Ascending aorta (tissue), 2 donors: ENCODE measurements at regions of chr6 and their contacts with region 1.

Region 1: GRCh38 chr6:160041608-160042007 is 72.7 kb downstream of the IGF2R start:
- DNase-seq: no peak
- H3K4me3 ChIP-seq: peak overlapping the region in 1 of 2 donors; percentile 28
- H3K27ac ChIP-seq: peak overlapping the region; percentile 63 to 81
- H3K4me1 ChIP-seq: peaks cover 5 to 28% of the 10 kb centered on the region in 2 donors
- H3K27me3 ChIP-seq: no peaks in the 10 kb centered on the region
- CTCF ChIP-seq: peak in 1 of 3 experiments; percentile 17

Region 2: GRCh38 chr6:159761873-159762680 is 279.5 kb before region 1 on chr6 and contains the start of gene ACAT2:
- intact Hi-C with region 1: no loop called
- DNase-seq: peak; percentile 89 to 98
- H3K4me3 ChIP-seq: peak within 1 kb of the TSS; percentile 80 to 99
- H3K27ac ChIP-seq: peak within 1 kb of the TSS; percentile 96 to 99
- H3K4me1 ChIP-seq: peaks cover 5 to 11% of the 10 kb centered on the region in 2 donors
- H3K27me3 ChIP-seq: no peaks in the 10 kb centered on the region
- CTCF ChIP-seq: peak in 1 of 3 experiments; percentile 18
- total RNA-seq, gene ACAT2: 0.85 TPM

Region 3: DNA sequence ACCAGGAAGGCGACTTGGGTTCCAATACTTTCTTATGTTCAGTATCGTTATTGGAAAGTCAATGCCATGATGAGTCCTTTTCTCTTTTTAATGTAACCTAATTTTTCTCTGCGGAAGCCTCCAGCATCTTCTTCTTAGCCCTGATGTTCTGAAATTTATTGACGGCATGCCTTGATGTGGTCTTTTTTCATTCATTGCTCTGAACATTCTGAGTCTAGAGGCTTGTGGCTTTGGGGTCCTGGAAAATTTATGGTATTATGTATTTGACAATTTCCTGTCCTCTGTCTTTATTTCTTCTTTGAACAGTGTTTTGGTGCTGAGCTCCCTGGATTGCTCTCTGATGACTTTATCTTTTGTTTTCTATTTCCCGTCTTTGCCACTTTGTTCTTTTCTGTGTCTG is 179.5 kb before region 1 on chr6:
- intact Hi-C with region 1: loop called (anchors 5 kb)
- DNase-seq: no peak
- H3K4me3 ChIP-seq: no peak overlapping the region
- H3K27ac ChIP-seq: no peak overlapping the region
- H3K4me1 ChIP-seq: no peaks in the 10 kb centered on the region
- H3K27me3 ChIP-seq: no peaks in the 10 kb centered on the region
- CTCF ChIP-seq: no peak

Region 4: GRCh38 chr6:159968440-159969203 is 73.0 kb before region 1 on chr6 and contains the start of gene IGF2R:
- intact Hi-C with region 1: loop called (anchors 2 kb)
- DNase-seq: peak; percentile 89 to 97
- H3K4me3 ChIP-seq: peak within 1 kb of the TSS; percentile 100
- H3K27ac ChIP-seq: peak within 1 kb of the TSS; percentile 86 to 90
- H3K4me1 ChIP-seq: peaks cover 0 to 15% of the 10 kb centered on the region in 2 donors
- H3K27me3 ChIP-seq: no peaks in the 10 kb centered on the region
- CTCF ChIP-seq: no peak
- total RNA-seq, gene IGF2R: 104 TPM

Region 5: DNA sequence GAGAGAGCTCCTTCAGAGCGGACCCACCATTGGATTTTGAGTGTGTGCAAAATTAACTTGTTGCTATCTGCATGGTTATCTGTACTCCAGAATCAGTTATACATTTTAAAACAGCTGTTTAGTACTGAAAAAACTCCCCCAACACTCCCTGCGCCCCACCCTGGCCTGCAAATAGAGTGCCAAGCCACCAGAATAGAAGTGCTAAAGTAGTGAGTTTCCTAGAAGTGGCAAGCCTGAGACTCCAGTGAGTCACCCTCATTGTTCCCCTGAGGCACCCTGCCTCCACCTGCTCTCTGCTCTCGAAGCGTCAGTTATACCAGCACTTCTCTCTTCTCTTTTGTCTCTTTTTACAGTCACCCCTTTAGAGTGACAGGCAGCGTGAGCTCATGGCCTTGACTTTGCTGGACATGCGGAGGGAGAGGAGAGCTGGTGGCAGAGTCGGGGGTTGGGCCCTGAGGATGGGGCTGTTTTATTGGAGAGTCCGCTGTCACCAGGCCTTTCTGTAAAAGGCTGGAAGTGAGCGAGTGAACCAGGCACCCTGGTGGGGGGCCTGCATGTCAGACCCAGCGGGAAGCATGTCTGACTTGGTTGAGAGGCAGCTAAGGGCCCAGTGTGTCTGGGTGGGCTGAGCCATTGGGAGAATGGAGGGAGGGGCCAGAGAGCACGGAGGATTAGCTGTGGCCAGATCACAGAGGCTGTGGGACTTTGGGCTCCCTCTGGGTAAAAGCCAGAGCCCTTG is 62.3 kb before region 1 on chr6:
- intact Hi-C with region 1: loop called (anchors 2 kb)
- DNase-seq: peak in 1 of 2 donors; percentile 80
- H3K4me3 ChIP-seq: peak overlapping the region in 1 of 2 donors; percentile 7
- H3K27ac ChIP-seq: peak overlapping the region; percentile 58 to 78
- H3K4me1 ChIP-seq: peaks cover 29 to 55% of the 10 kb centered on the region in 2 donors
- H3K27me3 ChIP-seq: no peaks in the 10 kb centered on the region
- CTCF ChIP-seq: no peak

Region 6: GRCh38 chr6:160139420-160139851 is 97.8 kb after region 1 on chr6:
- intact Hi-C with region 1: no loop called
- DNase-seq: peak in 1 of 2 donors; percentile 83
- H3K4me3 ChIP-seq: no peak overlapping the region
- H3K27ac ChIP-seq: peak overlapping the region; percentile 90 to 91
- H3K4me1 ChIP-seq: peaks cover 18 to 33% of the 10 kb centered on the region in 2 donors
- H3K27me3 ChIP-seq: no peaks in the 10 kb centered on the region
- CTCF ChIP-seq: no peak

Region 7: DNA sequence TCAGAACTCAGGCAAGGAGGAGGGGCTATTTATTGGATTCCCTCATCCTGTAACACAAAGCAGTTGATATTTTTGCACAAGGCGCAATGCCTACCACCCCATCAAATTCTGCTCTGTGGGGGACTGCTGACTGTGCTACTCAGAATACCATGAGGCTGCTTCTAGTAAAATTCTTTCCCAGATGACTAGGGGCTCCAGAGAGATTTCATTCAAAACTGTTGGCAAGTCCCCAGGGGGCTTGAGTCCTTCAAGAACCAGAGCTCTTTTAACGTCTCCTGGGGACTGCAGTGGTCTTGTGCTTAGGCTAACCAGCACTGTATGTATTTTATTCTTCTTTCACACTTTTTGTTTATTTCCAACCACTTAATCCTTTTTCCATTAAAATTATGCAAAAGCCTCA is 1598.2 kb after region 1 on chr6:
- intact Hi-C with region 1: no loop called
- DNase-seq: no peak
- H3K4me3 ChIP-seq: no peak overlapping the region
- H3K27ac ChIP-seq: no peak overlapping the region
- H3K4me1 ChIP-seq: no peaks in the 10 kb centered on the region
- H3K27me3 ChIP-seq: no peaks in the 10 kb centered on the region
- CTCF ChIP-seq: no peak